ENCODE measurements at regions of chr9 and their contacts with region 1.

Region 1: GRCh38 chr9:129610473-129611301 is 10.2 kb downstream of the C9orf50 start:
- DNase-seq: peak; percentile 64
- H3K4me3 ChIP-seq: peak overlapping the region; percentile 24 to 56 (median 46)
- H3K27ac ChIP-seq: peak overlapping the region; percentile 16
- H3K4me1 ChIP-seq: peaks cover 14% of the 10 kb centered on the region
- H3K27me3 ChIP-seq: peaks cover 0 to 5% of the 10 kb centered on the region in 2 experiments
- CTCF ChIP-seq: peak; percentile 86 to 96
- POLR2A ChIP-seq: no peak

Region 2: GRCh38 chr9:129006328-129007034 is 604.2 kb before region 1 on chr9:
- CTCF ChIA-PET with region 1: no interaction called
- POLR2A ChIA-PET with region 1: no interaction called
- dilution Hi-C with region 1: no loop called
- intact Hi-C with region 1: loop called (anchors 10 kb)
- DNase-seq: peak; percentile 70
- H3K4me3 ChIP-seq: no peak overlapping the region
- H3K27ac ChIP-seq: no peak overlapping the region
- H3K4me1 ChIP-seq: no peaks in the 10 kb centered on the region
- H3K27me3 ChIP-seq: no peaks in the 10 kb centered on the region
- CTCF ChIP-seq: peak; percentile 91 to 93
- POLR2A ChIP-seq: no peak

Region 3: GRCh38 chr9:129131300-129132145 is 479.2 kb before region 1 on chr9:
- CTCF ChIA-PET with region 1: interaction called, 36 read pairs
- POLR2A ChIA-PET with region 1: interaction called, 3 read pairs
- dilution Hi-C with region 1: no loop called
- intact Hi-C with region 1: loop called (anchors 1 kb)
- DNase-seq: peak; percentile 65
- H3K4me3 ChIP-seq: no peak overlapping the region
- H3K27ac ChIP-seq: no peak overlapping the region
- H3K4me1 ChIP-seq: peaks cover 12% of the 10 kb centered on the region
- H3K27me3 ChIP-seq: no peaks in the 10 kb centered on the region
- CTCF ChIP-seq: peak; percentile 96 to 99
- POLR2A ChIP-seq: no peak

Region 4: GRCh38 chr9:129320575-129321263 is 290.0 kb before region 1 on chr9:
- CTCF ChIA-PET with region 1: no interaction called
- POLR2A ChIA-PET with region 1: no interaction called
- dilution Hi-C with region 1: no loop called
- intact Hi-C with region 1: loop called (anchors 5 kb)
- DNase-seq: peak; percentile 66
- H3K4me3 ChIP-seq: peak overlapping the region in 2 of 3 experiments; percentile 15 to 29
- H3K27ac ChIP-seq: no peak overlapping the region
- H3K4me1 ChIP-seq: peaks cover 8% of the 10 kb centered on the region
- H3K27me3 ChIP-seq: no peaks in the 10 kb centered on the region
- CTCF ChIP-seq: no peak
- POLR2A ChIP-seq: no peak

Region 5: GRCh38 chr9:129413537-129414376 is 196.9 kb before region 1 on chr9:
- CTCF ChIA-PET with region 1: no interaction called
- POLR2A ChIA-PET with region 1: no interaction called
- dilution Hi-C with region 1: no loop called
- intact Hi-C with region 1: loop called (anchors 2 kb)
- DNase-seq: peak; percentile 95
- H3K4me3 ChIP-seq: peak overlapping the region in 1 of 3 experiments; percentile 35
- H3K27ac ChIP-seq: peak overlapping the region; percentile 96
- H3K4me1 ChIP-seq: peaks cover 15% of the 10 kb centered on the region
- H3K27me3 ChIP-seq: no peaks in the 10 kb centered on the region
- CTCF ChIP-seq: no peak
- POLR2A ChIP-seq: peak; percentile 70

Region 6: GRCh38 chr9:129487642-129488409 is 122.9 kb before region 1 on chr9:
- CTCF ChIA-PET with region 1: interaction called, 6 read pairs
- POLR2A ChIA-PET with region 1: no interaction called
- dilution Hi-C with region 1: no loop called
- intact Hi-C with region 1: loop called (anchors 2 kb)
- DNase-seq: peak; percentile 67
- H3K4me3 ChIP-seq: peak overlapping the region in 1 of 3 experiments; percentile 30
- H3K27ac ChIP-seq: peak overlapping the region; percentile 66
- H3K4me1 ChIP-seq: peaks cover 55% of the 10 kb centered on the region
- H3K27me3 ChIP-seq: no peaks in the 10 kb centered on the region
- CTCF ChIP-seq: no peak
- POLR2A ChIP-seq: peak; percentile 58

Region 7: DNA sequence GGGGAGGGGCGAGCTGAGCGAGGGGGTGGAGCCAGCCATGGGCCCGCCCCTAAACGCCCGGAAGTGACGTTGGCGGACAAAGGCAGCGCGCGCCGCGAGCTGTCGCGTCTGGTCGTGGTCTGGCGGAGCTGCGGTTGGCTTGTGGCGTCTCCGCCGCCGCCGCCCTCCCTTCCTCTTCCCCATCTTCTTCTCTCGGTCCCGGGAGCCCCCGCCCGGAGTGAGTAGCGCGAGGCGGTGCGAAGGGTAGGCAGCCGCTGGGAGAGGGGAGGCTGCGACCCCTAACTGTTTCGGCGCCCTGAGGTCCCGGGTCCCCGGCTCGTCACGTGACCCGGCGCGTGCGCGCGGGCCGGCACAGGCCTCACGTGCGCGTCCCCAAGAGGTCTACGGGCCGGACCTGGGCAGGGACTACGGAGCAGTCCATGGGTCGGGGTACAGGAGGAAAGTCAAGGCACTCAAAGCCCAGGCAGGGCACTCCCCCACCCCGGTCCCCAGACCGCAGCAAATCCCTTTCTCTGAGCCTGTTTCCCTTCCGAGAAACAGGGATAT is 15.5 kb after region 1 on chr9 and contains the start of gene NTMT1:
- CTCF ChIA-PET with region 1: interaction called, 89 read pairs
- POLR2A ChIA-PET with region 1: no interaction called
- dilution Hi-C with region 1: no loop called
- intact Hi-C with region 1: loop called (anchors 1 kb)
- DNase-seq: peak; percentile 84
- H3K4me3 ChIP-seq: peak within 1 kb of the TSS; percentile 35 to 76 (median 71)
- H3K27ac ChIP-seq: peak within 1 kb of the TSS; percentile 71
- H3K4me1 ChIP-seq: peaks cover 16% of the 10 kb centered on the region
- H3K27me3 ChIP-seq: no peaks in the 10 kb centered on the region
- CTCF ChIP-seq: no peak
- POLR2A ChIP-seq: peak; percentile 93
- total RNA-seq, gene NTMT1: 47.6 and 53.2 TPM in 2 replicates

Region 8: GRCh38 chr9:129888293-129889121 is 277.8 kb after region 1 on chr9:
- CTCF ChIA-PET with region 1: no interaction called
- POLR2A ChIA-PET with region 1: no interaction called
- dilution Hi-C with region 1: no loop called
- intact Hi-C with region 1: no loop called
- DNase-seq: no peak
- H3K4me3 ChIP-seq: no peak overlapping the region
- H3K27ac ChIP-seq: no peak overlapping the region
- H3K4me1 ChIP-seq: peaks cover 37% of the 10 kb centered on the region
- H3K27me3 ChIP-seq: no peaks in the 10 kb centered on the region
- CTCF ChIP-seq: no peak
- POLR2A ChIP-seq: no peak

Measured in endothelial cell of umbilical vein (primary cell).